Right ventricle myocardium superior (tissue), 1 donor: ENCODE measurements at regions of chr1 and their contacts with region 1.

Region 1: DNA sequence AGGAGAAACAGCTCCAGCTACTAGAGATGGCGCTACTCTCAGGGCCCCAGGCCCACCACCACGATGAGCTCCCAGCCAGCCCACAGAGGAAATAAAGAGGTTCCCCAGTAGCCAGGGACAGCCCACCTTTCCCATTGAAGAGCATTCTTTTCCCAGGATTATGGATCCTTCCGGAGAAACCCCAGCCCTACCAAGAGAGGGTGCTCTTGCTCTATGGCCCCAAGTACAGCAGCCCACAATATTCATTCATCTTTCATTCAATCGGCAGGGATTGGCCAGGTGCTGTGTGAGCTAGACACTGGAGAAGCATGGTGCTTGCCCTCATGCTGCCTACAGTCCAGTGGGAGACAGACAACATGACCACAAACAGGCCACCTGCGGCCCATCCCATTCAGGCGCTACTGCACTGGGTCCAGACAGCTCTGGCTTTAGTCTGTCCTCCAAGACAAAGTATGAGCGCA is 29.9 kb downstream of the PMVK start:
- DNase-seq: no peak
- ATAC-seq: peak; percentile 72

Region 2: DNA sequence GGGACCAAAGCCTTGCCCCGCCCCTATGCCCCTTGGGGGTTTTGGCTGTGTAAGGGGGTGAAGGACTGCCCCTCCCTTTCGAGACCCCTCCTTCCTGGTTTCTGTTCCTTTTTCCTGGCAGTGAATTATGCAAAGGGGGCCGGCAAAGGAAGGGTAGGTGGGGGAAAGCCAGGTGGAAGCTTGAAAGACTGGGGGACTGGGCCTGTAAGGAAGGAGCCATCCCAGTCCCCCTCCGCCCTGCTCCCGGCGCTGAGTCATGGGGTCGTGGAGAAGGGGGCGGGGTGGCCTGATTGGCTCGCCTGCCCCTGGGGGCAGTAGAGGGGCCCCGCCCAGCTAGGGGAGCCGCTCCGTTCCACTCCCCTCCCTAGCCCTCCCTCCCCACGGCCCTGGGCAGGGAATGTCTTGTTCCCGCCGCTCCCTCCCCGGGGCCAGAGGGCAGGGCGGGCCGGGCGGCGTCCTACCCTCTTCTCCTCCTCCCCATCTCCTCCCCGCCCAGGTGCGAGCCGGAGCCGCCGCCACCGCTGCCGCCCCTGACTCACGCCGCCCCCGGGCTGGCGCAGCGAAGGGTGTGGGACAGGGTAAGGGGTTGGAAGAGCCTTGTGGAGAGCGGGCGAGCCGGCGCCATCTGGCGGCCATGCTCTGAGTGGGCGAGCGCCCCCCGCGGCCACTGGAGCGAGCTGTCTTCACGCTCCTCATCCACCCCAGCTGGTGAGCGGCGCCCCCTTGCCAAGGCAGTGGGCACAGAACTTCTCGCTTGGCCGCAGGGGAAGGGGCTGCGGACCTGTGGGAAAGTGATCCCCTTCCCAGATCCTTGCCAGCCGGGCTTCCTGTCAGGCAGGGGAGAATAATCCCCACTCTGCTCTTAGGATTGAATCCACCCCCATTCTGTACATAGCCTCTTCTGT is 110.6 kb after region 1 on chr1:
- intact Hi-C with region 1: loop called (anchors 10 kb)
- DNase-seq: peak; percentile 94
- ATAC-seq: peak; percentile 94

Region 3: GRCh38 chr1:155084722-155085503 is 178.3 kb after region 1 on chr1:
- intact Hi-C with region 1: loop called (anchors 10 kb)
- DNase-seq: peak; percentile 97
- ATAC-seq: peak; percentile 94